Activated CD4-positive, alpha-beta T cell treated with anti-CD3 and anti-CD28 coated beads, Interleukin-2, amount 10 ng/mL, durations not matched to agents 24 days and 14 days (primary cell): ENCODE measurements at regions of chr6 and their contacts with region 1.

Region 1: DNA sequence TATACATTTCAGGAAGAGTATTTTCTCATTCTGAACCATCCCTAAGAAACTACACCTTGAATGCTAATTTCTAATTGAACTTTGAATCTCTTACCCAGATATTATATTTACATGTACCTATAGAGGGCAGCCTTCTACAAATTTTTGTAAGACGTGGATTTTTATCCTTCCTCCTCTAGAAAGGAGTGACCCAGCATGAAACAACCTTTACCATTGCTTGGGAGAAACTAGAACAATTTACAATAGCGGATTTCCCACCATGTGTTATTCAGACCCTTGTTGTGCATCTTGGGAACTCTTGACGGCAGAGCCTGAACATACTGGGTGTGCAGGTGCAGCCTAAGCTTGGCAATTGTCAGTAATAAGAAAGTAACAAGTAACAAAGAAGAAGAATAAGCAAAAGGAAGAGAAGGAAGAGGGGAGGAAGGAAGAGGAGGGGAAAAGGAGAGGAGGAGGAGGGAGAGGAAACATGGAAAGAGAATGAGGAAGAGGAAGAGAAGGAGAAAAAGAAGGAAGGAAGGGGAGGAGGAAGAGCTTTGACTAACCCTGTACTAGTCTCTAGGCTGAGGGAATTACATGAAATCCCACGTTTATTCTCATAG is 10.8 kb upstream of the TAAR1 start:
- DNase-seq: peak; percentile 56
- H3K4me3 Mint-ChIP-seq: no peak overlapping the region
- H3K27ac Mint-ChIP-seq: no peak overlapping the region
- H3K4me1 Mint-ChIP-seq: peaks cover 4% of the 10 kb centered on the region
- H3K27me3 Mint-ChIP-seq: peaks cover 19% of the 10 kb centered on the region

Region 2: DNA sequence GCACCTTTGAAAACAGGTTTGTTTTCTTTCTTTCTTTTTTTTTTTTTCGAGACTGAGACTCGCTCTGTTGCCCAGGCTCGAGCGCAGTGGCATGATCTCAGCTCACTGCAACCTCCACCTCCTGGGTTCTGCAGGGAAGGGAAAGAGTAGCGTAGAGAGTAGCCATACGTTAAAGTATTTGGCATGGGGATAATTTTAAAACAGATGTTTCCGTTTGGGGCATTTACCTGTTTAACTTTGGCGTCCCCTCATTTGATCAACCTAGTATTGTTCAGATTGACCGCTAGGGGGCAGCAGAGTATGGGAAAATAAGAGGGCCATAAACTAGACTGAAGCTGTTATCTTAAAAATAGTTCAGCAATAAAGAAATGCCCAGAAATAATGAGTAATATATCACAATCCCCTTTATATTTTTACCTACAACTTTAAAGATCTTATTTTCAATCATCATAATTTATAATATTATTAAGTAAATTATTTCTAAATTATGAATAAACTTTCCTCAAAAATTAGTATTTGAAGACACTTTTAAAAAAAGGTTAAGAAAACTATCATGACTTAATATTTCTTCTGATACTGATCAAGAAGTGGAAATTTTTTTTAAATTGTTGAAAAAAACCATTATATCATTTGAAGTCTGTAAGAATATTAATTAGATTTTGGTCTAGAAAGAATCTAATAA is 139.4 kb before region 1 on chr6:
- intact Hi-C with region 1: loop called (anchors 10 kb)
- DNase-seq: peak; percentile 90
- H3K4me3 Mint-ChIP-seq: no peak overlapping the region
- H3K27ac Mint-ChIP-seq: no peak overlapping the region
- H3K4me1 Mint-ChIP-seq: no peaks in the 10 kb centered on the region
- H3K27me3 Mint-ChIP-seq: peaks cover 23% of the 10 kb centered on the region

Region 3: GRCh38 chr6:132693478-132693877 is 23.7 kb after region 1 on chr6:
- intact Hi-C with region 1: no loop called
- DNase-seq: no peak
- H3K4me3 Mint-ChIP-seq: no peak overlapping the region
- H3K27ac Mint-ChIP-seq: no peak overlapping the region
- H3K4me1 Mint-ChIP-seq: no peaks in the 10 kb centered on the region
- H3K27me3 Mint-ChIP-seq: peaks cover 21% of the 10 kb centered on the region

Region 4: GRCh38 chr6:132725947-132726607 is 56.3 kb after region 1 on chr6:
- intact Hi-C with region 1: no loop called
- DNase-seq: no peak
- H3K4me3 Mint-ChIP-seq: no peak overlapping the region
- H3K27ac Mint-ChIP-seq: no peak overlapping the region
- H3K4me1 Mint-ChIP-seq: peaks cover 8% of the 10 kb centered on the region
- H3K27me3 Mint-ChIP-seq: peaks cover 4% of the 10 kb centered on the region

Region 5: GRCh38 chr6:132768051-132768517 is 98.3 kb after region 1 on chr6:
- intact Hi-C with region 1: loop called (anchors 1 kb)
- DNase-seq: peak; percentile 69
- H3K4me3 Mint-ChIP-seq: no peak overlapping the region
- H3K27ac Mint-ChIP-seq: no peak overlapping the region
- H3K4me1 Mint-ChIP-seq: peaks cover 17% of the 10 kb centered on the region
- H3K27me3 Mint-ChIP-seq: no peaks in the 10 kb centered on the region

Region 6: DNA sequence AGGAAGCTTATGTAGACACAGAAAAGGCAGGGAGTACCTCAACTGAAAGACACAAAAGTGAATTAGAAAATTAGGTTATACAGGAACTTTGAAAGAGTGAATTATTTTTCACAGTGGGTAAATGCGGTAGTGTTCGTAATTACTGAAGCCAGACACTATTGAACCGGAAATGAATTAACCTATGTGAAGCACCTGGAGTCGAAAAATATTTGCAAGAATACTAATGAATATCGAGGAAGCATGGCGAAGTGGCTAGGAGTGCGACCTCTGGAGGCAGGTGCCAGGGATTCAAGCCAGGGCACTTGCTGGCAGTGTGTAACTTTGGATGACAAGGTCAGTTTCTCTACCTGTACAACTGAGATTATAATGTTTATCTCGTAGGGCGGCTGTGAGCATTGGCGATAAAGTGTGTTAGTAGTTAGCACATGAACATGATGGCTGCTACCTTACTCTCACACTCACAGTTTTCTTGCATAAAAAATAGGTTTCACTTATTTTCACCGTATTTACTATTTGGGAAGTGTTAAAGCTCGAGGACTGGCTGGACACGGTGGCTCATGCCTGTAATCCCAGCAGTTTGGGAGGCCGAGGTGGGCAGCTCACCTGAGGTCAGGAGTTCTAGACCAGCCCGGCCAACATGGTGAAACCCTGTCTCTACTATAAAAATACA is 129.2 kb after region 1 on chr6:
- intact Hi-C with region 1: loop called (anchors 1 kb)
- DNase-seq: peak; percentile 88
- H3K4me3 Mint-ChIP-seq: peak overlapping the region; percentile 92
- H3K27ac Mint-ChIP-seq: no peak overlapping the region
- H3K4me1 Mint-ChIP-seq: peaks cover 7% of the 10 kb centered on the region
- H3K27me3 Mint-ChIP-seq: peaks cover 5% of the 10 kb centered on the region